MCF 10A (cell line): ENCODE measurements at regions of chr1 and their contacts with region 1.

Region 1: GRCh38 chr1:66436378-66437145 is 97.4 kb upstream of the SGIP1 start:
- DNase-seq: peak; percentile 89
- H3K4me3 Mint-ChIP-seq: no peak overlapping the region
- H3K27ac Mint-ChIP-seq: peak overlapping the region; percentile 77
- H3K4me1 Mint-ChIP-seq: peaks cover 27% of the 10 kb centered on the region
- H3K27me3 Mint-ChIP-seq: no peaks in the 10 kb centered on the region
- CTCF ChIP-seq: peak; percentile 38

Region 2: DNA sequence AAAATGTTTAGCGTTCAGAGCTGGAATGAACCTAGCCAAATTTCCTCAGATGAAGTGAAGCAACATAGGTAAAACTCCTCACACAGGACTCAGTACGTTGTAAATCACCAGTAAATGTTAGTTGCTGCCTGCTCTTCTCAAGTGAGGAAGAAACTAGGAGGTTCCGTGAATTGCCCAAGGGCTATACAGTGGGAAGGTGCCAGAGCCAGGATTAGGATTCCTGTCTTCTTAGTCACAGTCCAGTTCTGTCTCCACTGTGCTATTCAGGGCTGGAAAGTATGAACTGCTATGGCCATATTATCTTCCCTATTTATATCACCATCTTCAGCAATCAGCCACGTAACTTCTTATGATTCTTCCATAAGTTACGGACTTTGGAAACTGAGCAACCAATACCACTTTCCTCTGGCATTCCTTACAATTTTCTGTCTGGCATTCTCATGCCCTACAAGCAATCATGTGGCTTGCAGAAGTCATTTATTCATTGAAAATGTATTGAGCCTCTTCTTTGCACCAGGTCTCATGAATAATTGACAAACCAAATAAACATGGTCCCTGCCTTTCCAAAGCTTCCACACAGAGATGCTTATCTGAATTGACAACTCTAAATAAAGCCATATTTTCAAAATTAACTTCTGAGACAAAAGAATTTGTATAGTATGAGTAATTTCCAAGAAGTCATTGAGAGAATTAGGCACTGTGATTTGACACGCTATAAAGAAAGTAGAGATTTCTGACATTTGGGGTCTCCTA is 174.2 kb before region 1 on chr1:
- CTCF ChIA-PET with region 1: interaction called, 687 read pairs
- POLR2A ChIA-PET with region 1: interaction called, 21 read pairs
- intact Hi-C with region 1: no loop called
- DNase-seq: peak; percentile 96
- H3K4me3 Mint-ChIP-seq: peak overlapping the region; percentile 9
- H3K27ac Mint-ChIP-seq: peak overlapping the region; percentile 86
- H3K4me1 Mint-ChIP-seq: peaks cover 43% of the 10 kb centered on the region
- H3K27me3 Mint-ChIP-seq: no peaks in the 10 kb centered on the region
- CTCF ChIP-seq: no peak

Region 3: DNA sequence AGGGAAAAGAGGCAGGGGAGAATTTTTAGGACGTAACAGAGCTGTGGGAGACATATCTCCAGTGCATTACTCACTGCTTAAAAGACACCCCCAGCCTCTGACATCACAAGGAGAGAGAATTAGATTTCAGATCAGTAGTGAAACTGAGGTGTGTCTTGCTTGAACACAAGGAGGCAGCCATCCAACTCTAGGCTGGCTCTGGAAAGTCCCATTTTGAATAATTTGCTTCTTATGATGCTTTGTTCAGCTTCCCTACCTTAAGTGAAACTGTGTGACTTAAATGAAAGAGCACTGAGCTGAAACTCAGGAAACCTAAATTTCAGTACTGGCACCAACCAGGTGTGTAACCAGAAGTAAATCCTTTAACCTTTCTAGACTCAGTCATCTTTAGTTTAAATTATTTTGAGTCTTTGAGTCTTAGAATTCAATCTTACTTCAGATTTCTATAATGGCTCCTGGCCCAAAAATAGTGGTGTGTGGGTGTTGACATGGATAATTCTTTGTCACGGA is 154.2 kb before region 1 on chr1:
- CTCF ChIA-PET with region 1: interaction called, 19 read pairs
- POLR2A ChIA-PET with region 1: interaction called, 7 read pairs
- intact Hi-C with region 1: no loop called
- DNase-seq: peak; percentile 87
- H3K4me3 Mint-ChIP-seq: no peak overlapping the region
- H3K27ac Mint-ChIP-seq: peak overlapping the region; percentile 90
- H3K4me1 Mint-ChIP-seq: peaks cover 22% of the 10 kb centered on the region
- H3K27me3 Mint-ChIP-seq: no peaks in the 10 kb centered on the region
- CTCF ChIP-seq: no peak

Region 4: GRCh38 chr1:66350001-66350547 is 86.5 kb before region 1 on chr1:
- CTCF ChIA-PET with region 1: interaction called, 15 read pairs
- POLR2A ChIA-PET with region 1: interaction called, 3 read pairs
- intact Hi-C with region 1: no loop called
- DNase-seq: no peak
- H3K4me3 Mint-ChIP-seq: no peak overlapping the region
- H3K27ac Mint-ChIP-seq: peak overlapping the region; percentile 36
- H3K4me1 Mint-ChIP-seq: peaks cover 56% of the 10 kb centered on the region
- H3K27me3 Mint-ChIP-seq: no peaks in the 10 kb centered on the region
- CTCF ChIP-seq: no peak

Region 5: DNA sequence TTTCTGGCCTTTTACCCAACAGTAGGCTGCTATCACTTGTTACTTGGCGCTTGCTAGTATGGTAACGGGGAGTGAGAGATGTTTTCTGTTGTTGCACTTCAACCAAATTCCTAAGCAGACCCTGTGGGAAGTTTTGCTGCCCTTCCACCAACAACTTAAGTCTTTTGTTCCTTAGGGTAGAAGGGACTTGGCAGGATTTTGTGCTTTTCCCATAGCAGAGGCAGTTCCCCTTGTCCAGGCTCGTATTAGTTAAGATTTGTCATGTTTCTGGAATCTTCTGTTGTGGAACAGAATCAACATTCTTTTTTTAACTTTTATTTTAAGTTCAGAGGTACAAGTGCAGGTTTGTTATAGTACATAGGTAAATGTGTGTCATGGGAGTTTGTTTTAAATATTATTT is 24.2 kb after region 1 on chr1:
- CTCF ChIA-PET with region 1: no interaction called
- POLR2A ChIA-PET with region 1: no interaction called
- intact Hi-C with region 1: no loop called
- DNase-seq: no peak
- H3K4me3 Mint-ChIP-seq: no peak overlapping the region
- H3K27ac Mint-ChIP-seq: no peak overlapping the region
- H3K4me1 Mint-ChIP-seq: peaks cover 6% of the 10 kb centered on the region
- H3K27me3 Mint-ChIP-seq: no peaks in the 10 kb centered on the region
- CTCF ChIP-seq: no peak